ENCODE measurements at regions of chr1 and their contacts with region 1.

Region 1: GRCh38 chr1:62654744-62655143 is 33.4 kb downstream of the DOCK7 start:
- DNase-seq: no peak
- H3K4me3 ChIP-seq: no peak overlapping the region
- H3K27ac ChIP-seq: no peak overlapping the region
- H3K4me1 ChIP-seq: no peaks in the 10 kb centered on the region
- H3K27me3 ChIP-seq: no peaks in the 10 kb centered on the region
- CTCF ChIP-seq: no peak
- EP300 ChIP-seq: no peak
- POLR2A ChIP-seq: no peak

Region 2: GRCh38 chr1:61873581-61873980 is 781.2 kb before region 1 on chr1:
- intact Hi-C with region 1: no loop called
- DNase-seq: no peak
- H3K4me3 ChIP-seq: no peak overlapping the region
- H3K27ac ChIP-seq: no peak overlapping the region
- H3K4me1 ChIP-seq: no peaks in the 10 kb centered on the region
- H3K27me3 ChIP-seq: no peaks in the 10 kb centered on the region
- CTCF ChIP-seq: no peak
- EP300 ChIP-seq: no peak
- POLR2A ChIP-seq: no peak

Region 3: GRCh38 chr1:62530516-62531154 is 124.1 kb before region 1 on chr1:
- intact Hi-C with region 1: no loop called
- DNase-seq: peak in 1 of 5 donors; percentile 22
- H3K4me3 ChIP-seq: no peak overlapping the region
- H3K27ac ChIP-seq: no peak overlapping the region
- H3K4me1 ChIP-seq: no peaks in the 10 kb centered on the region
- H3K27me3 ChIP-seq: no peaks in the 10 kb centered on the region
- CTCF ChIP-seq: no peak
- EP300 ChIP-seq: no peak
- POLR2A ChIP-seq: no peak

Region 4: GRCh38 chr1:63480057-63480456 is 825.3 kb after region 1 on chr1:
- intact Hi-C with region 1: loop called in 1 of 4 experiments (anchors 5 kb)
- DNase-seq: no peak
- H3K4me3 ChIP-seq: no peak overlapping the region
- H3K27ac ChIP-seq: no peak overlapping the region
- H3K4me1 ChIP-seq: no peaks in the 10 kb centered on the region
- H3K27me3 ChIP-seq: no peaks in the 10 kb centered on the region
- CTCF ChIP-seq: no peak
- EP300 ChIP-seq: no peak
- POLR2A ChIP-seq: no peak

Measured in ovary (tissue), 10 donors.